ENCODE measurements at regions of chr17 and their contacts with region 1.

Region 1: GRCh38 chr17:82351716-82352488 is 7.1 kb upstream of the TEX19 start:
- DNase-seq: peak; percentile 59 to 84 (median 77)
- ATAC-seq: peak; percentile 91
- H3K4me3 ChIP-seq: no peak overlapping the region
- H3K4me3 Mint-ChIP-seq: peak overlapping the region in 1 of 10 donors; percentile 34
- H3K27ac ChIP-seq: no peak overlapping the region
- H3K27ac Mint-ChIP-seq: no peak overlapping the region
- H3K4me1 ChIP-seq: no peaks in the 10 kb centered on the region
- H3K4me1 Mint-ChIP-seq: peaks cover 0 to 7% (median under 1%) of the 10 kb centered on the region in 7 donors
- H3K27me3 ChIP-seq: no peaks in the 10 kb centered on the region
- H3K27me3 Mint-ChIP-seq: peaks cover 0 to 15% (median 5%) of the 10 kb centered on the region in 5 donors

Region 2: GRCh38 chr17:82225368-82226029 is 126.4 kb before region 1 on chr17:
- CTCF ChIA-PET with region 1: interaction called, 13 read pairs
- POLR2A ChIA-PET with region 1: no interaction called
- intact Hi-C with region 1: no loop called
- DNase-seq: no peak
- ATAC-seq: no peak
- H3K4me3 ChIP-seq: no peak overlapping the region
- H3K4me3 Mint-ChIP-seq: no peak overlapping the region
- H3K27ac ChIP-seq: no peak overlapping the region
- H3K27ac Mint-ChIP-seq: no peak overlapping the region
- H3K4me1 ChIP-seq: peaks cover 20 to 22% of the 10 kb centered on the region in 2 donors
- H3K4me1 Mint-ChIP-seq: peaks cover 4 to 15% (median 12%) of the 10 kb centered on the region in 7 donors
- H3K27me3 ChIP-seq: no peaks in the 10 kb centered on the region
- H3K27me3 Mint-ChIP-seq: no peaks in the 10 kb centered on the region

Region 3: DNA sequence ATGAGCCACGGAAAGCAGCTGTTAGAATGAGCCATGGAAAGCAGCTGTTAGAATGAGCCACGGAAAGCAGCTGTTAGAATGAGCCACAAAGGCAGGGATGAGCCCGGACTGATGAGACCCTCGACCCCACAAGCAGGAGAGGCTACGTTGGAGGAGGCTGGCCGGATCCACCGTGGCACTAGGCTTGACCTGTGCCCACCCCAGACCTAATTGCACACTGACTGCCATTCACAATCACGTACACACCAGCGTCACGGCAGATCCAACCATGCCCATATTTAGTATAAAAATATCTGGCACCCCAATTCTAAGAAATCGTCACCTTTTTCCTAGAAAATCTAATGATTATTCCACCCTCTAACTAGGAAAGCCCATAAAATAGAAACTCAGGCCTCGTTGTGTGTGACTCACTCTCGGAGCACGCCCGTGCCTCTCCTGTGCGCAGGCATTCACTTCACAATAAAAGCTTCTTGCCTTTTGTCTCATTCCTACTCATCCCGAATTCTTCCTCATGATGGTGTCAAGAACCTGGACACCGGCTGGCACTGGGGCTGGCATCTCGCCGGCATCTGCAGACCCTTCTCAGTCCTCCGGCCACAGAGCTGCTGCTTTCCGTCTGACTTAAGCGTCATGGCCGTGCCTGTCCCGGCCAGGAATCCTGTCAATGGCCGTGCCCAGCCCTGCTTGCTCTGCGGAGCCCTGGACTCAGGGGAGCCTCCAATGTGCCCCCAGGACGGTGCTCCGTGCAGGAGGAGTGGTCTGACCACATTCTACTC is 12.9 kb before region 1 on chr17:
- CTCF ChIA-PET with region 1: no interaction called
- POLR2A ChIA-PET with region 1: no interaction called
- intact Hi-C with region 1: no loop called
- DNase-seq: no peak
- ATAC-seq: no peak
- H3K4me3 ChIP-seq: no peak overlapping the region
- H3K4me3 Mint-ChIP-seq: no peak overlapping the region
- H3K27ac ChIP-seq: no peak overlapping the region
- H3K27ac Mint-ChIP-seq: no peak overlapping the region
- H3K4me1 ChIP-seq: peaks cover 6 to 12% of the 10 kb centered on the region in 2 donors
- H3K4me1 Mint-ChIP-seq: peaks cover 13 to 24% (median 20%) of the 10 kb centered on the region in 7 donors
- H3K27me3 ChIP-seq: no peaks in the 10 kb centered on the region
- H3K27me3 Mint-ChIP-seq: peaks cover 0 to 11% (median 0%) of the 10 kb centered on the region in 5 donors

Region 4: DNA sequence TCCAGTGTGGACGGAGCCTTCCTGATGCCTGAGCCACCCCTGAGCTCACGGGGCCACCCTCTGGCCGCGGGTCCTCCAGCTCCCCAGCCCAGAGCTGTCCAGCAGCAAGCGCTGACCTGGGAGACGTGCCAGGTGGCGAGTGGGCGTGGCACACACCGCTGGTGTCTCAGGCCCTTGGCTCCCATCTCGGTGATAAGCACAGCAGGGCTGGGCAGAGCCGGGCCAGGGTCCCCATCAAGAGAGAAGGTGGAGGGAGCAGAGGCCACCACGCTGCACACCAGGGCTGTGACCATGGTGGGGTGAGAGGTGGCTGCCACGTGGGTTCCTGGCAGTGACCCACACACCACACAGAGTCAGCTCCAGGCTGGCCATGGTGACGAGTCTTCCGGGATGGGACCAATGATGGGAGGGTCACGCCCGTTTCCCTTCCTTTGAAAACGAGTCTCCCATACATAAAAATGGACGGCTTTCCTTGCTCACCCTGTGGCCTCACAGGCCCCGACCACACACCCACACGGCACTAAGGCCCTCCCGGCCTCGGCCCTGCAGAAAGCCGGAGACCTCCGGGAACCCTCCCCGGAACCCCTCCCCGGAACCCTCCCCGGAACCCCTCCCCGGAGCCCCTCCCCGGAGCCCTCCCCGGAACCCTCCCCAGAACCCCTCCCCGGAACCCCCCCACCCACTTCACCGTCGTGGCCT is 36.5 kb after region 1 on chr17:
- CTCF ChIA-PET with region 1: no interaction called
- POLR2A ChIA-PET with region 1: no interaction called
- intact Hi-C with region 1: no loop called
- DNase-seq: no peak
- ATAC-seq: no peak
- H3K4me3 ChIP-seq: no peak overlapping the region
- H3K4me3 Mint-ChIP-seq: no peak overlapping the region
- H3K27ac ChIP-seq: no peak overlapping the region
- H3K27ac Mint-ChIP-seq: peak overlapping the region in 1 of 9 donors; percentile 75
- H3K4me1 ChIP-seq: peaks cover 0 to 5% of the 10 kb centered on the region in 2 donors
- H3K4me1 Mint-ChIP-seq: peaks cover 0 to 10% (median 7%) of the 10 kb centered on the region in 7 donors
- H3K27me3 ChIP-seq: no peaks in the 10 kb centered on the region
- H3K27me3 Mint-ChIP-seq: no peaks in the 10 kb centered on the region

Region 5: DNA sequence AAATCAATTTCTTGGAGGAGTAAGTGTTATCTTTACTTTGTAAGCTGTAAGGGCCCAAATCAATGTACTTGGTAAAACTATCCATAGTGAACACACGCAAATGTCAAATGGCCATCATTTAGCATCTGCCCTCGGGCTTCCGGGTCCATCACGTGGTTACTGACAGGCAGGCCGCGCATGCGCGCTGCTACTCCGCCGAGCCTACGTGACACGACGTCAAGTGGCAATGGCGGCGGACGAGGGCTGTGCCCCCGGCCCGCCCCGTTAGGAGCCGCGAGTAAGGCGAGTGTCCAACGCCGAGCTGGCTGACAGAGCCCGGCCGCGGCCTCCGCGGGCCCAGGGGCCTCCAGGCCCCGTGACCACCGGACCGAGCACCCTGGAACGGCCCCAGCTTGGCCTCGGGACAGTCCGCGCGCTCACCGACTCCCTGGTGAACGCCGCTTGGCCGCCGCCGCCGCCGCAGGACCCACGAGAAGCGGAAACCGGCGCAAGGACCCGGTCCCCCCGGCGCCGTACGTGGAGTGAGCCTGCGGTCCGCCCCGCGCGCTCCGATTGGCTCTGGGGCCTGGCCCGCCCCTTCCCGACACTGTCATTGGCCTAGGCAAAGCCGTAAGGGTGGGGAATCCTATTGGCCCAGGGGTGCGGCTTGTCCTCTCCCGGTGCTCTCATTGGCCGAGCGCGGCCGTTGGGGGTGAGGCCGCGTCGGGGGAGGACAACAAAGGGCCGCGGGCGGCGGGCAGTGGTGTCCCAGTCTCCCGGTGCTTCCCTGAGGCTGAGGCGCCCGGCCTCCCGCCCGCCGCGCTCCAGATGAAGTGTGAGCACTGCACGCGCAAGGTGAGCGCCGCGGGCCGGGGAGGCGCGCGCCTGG is 106.3 kb after region 1 on chr17 and contains the start of gene NARF:
- CTCF ChIA-PET with region 1: no interaction called
- POLR2A ChIA-PET with region 1: no interaction called
- intact Hi-C with region 1: no loop called
- DNase-seq: peak; percentile 89 to 97 (median 97)
- ATAC-seq: peak; percentile 98
- H3K4me3 ChIP-seq: peak within 1 kb of the TSS; percentile 75
- H3K4me3 Mint-ChIP-seq: peak within 1 kb of the TSS; percentile 85 to 94 (median 88)
- H3K27ac ChIP-seq: peak within 1 kb of the TSS; percentile 97
- H3K27ac Mint-ChIP-seq: peak within 1 kb of the TSS; percentile 96 to 99 (median 98)
- H3K4me1 ChIP-seq: peaks cover 20% of the 10 kb centered on the region in 2 donors
- H3K4me1 Mint-ChIP-seq: peaks cover 22 to 47% (median 30%) of the 10 kb centered on the region in 7 donors
- H3K27me3 ChIP-seq: no peaks in the 10 kb centered on the region
- H3K27me3 Mint-ChIP-seq: no peaks in the 10 kb centered on the region
- total RNA-seq, gene NARF: 59.8 to 188 (median 67.1) TPM

Region 6: GRCh38 chr17:82494236-82495055 is 142.5 kb after region 1 on chr17:
- CTCF ChIA-PET with region 1: no interaction called
- POLR2A ChIA-PET with region 1: interaction called, 4 read pairs
- intact Hi-C with region 1: loop called (anchors 1 kb)
- DNase-seq: peak; percentile 68 to 92 (median 80)
- ATAC-seq: peak; percentile 80
- H3K4me3 ChIP-seq: no peak overlapping the region
- H3K4me3 Mint-ChIP-seq: peak overlapping the region in 9 of 10 donors; percentile 14 to 84 (median 65)
- H3K27ac ChIP-seq: peak overlapping the region; percentile 28
- H3K27ac Mint-ChIP-seq: peak overlapping the region; percentile 77 to 94 (median 87)
- H3K4me1 ChIP-seq: peaks cover 0 to 9% of the 10 kb centered on the region in 2 donors
- H3K4me1 Mint-ChIP-seq: peaks cover 8 to 33% (median 25%) of the 10 kb centered on the region in 7 donors
- H3K27me3 ChIP-seq: no peaks in the 10 kb centered on the region
- H3K27me3 Mint-ChIP-seq: peaks cover 0 to 2% (median 0%) of the 10 kb centered on the region in 5 donors

Region 7: DNA sequence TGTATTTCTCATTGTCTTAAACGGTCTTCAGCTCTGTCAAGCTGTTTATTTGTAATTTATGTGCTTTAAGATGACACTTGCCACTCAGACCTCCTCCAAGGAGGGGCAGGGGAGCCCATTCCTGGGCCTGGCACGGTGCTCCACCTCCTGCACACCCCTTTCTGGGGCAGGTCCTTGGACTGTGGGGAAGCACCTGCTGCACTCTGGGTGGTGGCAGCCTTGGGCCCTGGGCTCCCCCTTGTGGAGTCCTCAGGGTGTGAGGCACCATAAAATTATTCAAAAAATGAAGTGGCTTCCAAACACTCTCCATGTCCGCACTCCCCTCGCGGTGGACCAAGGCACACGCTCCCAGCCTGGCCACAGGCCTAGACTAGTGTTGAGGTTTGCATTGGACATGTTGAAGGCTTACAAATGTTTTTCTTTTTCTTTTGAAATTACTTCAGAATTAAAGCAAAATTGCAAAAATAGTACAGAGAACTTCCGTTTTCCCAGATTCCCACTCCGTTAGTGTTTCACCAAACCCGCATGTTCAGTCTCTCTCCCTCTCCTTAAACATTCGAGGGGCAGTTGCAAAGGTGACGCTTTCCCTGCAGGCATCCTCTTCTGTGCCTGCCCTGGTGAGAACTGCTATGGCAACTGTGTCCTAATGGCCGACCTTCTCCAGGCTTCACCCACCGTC is 200.0 kb after region 1 on chr17:
- CTCF ChIA-PET with region 1: interaction called, 13 read pairs
- POLR2A ChIA-PET with region 1: interaction called, 3 read pairs
- intact Hi-C with region 1: loop called in 1 of 2 experiments (anchors 1 kb)
- DNase-seq: peak; percentile 61 to 83 (median 77)
- ATAC-seq: peak; percentile 99
- H3K4me3 ChIP-seq: no peak overlapping the region
- H3K4me3 Mint-ChIP-seq: peak overlapping the region in 3 of 10 donors; percentile 13 to 64 (median 27)
- H3K27ac ChIP-seq: no peak overlapping the region
- H3K27ac Mint-ChIP-seq: peak overlapping the region in 8 of 9 donors; percentile 32 to 86 (median 81)
- H3K4me1 ChIP-seq: peaks cover 3 to 18% of the 10 kb centered on the region in 2 donors
- H3K4me1 Mint-ChIP-seq: peaks cover 28 to 52% (median 37%) of the 10 kb centered on the region in 7 donors
- H3K27me3 ChIP-seq: no peaks in the 10 kb centered on the region
- H3K27me3 Mint-ChIP-seq: no peaks in the 10 kb centered on the region

Region 8: DNA sequence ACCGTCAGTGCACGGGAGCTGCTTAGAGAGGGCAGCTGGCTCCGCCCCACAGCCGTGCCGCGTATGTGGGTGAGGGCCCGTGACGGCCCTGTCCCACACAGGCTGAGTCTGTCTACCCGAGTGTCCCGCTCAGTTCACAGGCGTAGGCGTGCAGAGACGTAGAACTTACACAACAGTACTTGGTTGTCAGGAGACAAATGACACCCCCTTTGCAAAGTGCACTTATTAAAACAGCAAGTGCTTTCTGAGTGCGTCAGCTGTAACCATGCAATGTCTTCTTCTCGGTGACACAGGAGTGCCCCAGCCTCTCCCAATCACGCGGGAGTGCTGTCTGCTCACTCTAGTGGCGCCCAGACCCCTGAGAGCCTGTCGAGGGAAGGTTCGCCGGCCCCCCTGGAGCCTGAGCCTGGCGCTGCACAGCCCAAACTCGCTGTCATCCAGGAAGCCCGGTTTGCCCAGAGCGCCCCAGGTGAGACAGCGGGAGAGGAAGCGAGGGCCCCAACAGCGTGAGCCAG is 231.9 kb after region 1 on chr17:
- CTCF ChIA-PET with region 1: no interaction called
- POLR2A ChIA-PET with region 1: no interaction called
- intact Hi-C with region 1: no loop called
- DNase-seq: peak in 1 of 9 donors; percentile 46
- ATAC-seq: peak; percentile 83
- H3K4me3 ChIP-seq: no peak overlapping the region
- H3K4me3 Mint-ChIP-seq: peak overlapping the region in 4 of 10 donors; percentile 35 to 61 (median 43)
- H3K27ac ChIP-seq: peak overlapping the region; percentile 39
- H3K27ac Mint-ChIP-seq: peak overlapping the region in 5 of 9 donors; percentile 45 to 80 (median 71)
- H3K4me1 ChIP-seq: no peaks in the 10 kb centered on the region
- H3K4me1 Mint-ChIP-seq: peaks cover 0 to 8% (median 0%) of the 10 kb centered on the region in 7 donors
- H3K27me3 ChIP-seq: no peaks in the 10 kb centered on the region
- H3K27me3 Mint-ChIP-seq: no peaks in the 10 kb centered on the region

Region 9: DNA sequence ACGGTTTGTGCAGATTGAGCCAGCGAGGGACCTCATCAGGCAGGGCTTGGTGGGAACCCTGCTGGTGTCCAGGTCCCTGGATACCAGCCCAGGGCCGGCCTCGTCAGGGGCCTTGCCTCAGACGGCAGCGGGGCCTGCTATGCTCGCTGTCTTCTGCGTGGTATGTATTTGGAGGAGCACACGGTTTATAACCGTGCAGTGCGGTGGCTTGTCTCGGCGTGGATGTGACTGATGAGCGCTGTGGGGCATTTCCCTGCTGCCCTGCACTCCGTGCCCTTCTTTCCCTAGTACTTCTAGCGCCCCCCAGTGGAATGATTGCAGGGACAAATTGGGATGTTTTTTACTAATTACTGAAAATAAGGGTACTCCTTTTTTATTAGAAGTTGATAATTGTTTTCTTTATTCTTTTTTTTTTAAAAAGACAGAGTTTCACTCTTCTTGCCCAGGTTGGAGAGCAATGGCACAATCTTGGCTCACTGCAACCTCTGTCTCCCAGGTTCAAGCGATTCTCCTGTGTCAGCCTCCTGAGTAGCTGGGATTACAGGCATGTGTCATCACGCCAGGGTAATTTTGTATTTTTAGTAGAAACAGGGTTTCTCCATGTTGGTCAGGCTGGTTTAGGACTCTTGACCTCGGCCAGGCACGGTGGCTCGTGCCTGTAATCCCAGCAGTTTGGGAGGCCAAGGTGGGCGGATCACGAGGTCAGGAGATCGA is 415.3 kb after region 1 on chr17:
- CTCF ChIA-PET with region 1: no interaction called
- POLR2A ChIA-PET with region 1: no interaction called
- intact Hi-C with region 1: loop called in 1 of 2 experiments (anchors 5 kb)
- DNase-seq: peak in 5 of 9 donors; percentile 12 to 39 (median 23)
- ATAC-seq: no peak
- H3K4me3 ChIP-seq: no peak overlapping the region
- H3K4me3 Mint-ChIP-seq: no peak overlapping the region
- H3K27ac ChIP-seq: no peak overlapping the region
- H3K27ac Mint-ChIP-seq: peak overlapping the region in 3 of 9 donors; percentile 21 to 36 (median 26)
- H3K4me1 ChIP-seq: peaks cover 0 to 1% of the 10 kb centered on the region in 2 donors
- H3K4me1 Mint-ChIP-seq: peaks cover 7 to 20% (median 16%) of the 10 kb centered on the region in 7 donors
- H3K27me3 ChIP-seq: no peaks in the 10 kb centered on the region
- H3K27me3 Mint-ChIP-seq: no peaks in the 10 kb centered on the region

Measured in naive thymus-derived CD4-positive, alpha-beta T cell (primary cell).